ENCODE measurements at regions of chr5 and their contacts with region 1.

Region 1: DNA sequence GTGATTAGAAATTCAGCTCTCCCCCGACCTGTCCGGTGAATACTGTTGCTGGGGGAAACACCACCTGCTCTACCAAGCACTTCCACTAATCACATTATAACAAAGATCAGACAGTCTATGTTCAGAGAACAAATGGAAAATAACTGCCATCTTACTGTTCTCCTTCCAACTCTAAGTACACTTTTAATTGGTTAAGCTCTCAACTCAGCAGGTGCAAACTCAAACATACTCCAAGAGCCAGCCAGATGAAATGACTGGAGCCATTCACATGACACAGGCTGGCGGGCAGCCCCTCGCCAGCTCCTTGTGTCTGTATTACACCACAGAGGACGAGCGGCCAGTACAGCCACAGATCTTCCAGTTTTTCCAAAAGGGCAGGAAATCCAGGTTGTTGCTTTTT is 16.1 kb downstream of the LIFR start:
- DNase-seq: no peak
- H3K4me3 ChIP-seq: no peak overlapping the region
- CTCF ChIP-seq: no peak

Region 2: GRCh38 chr5:38551030-38552017 is 11.0 kb after region 1 on chr5:
- CTCF ChIA-PET with region 1: interaction called, 21 read pairs
- POLR2A ChIA-PET with region 1: no interaction called
- DNase-seq: no peak
- H3K4me3 ChIP-seq: no peak overlapping the region
- CTCF ChIP-seq: peak; percentile 71

Region 3: DNA sequence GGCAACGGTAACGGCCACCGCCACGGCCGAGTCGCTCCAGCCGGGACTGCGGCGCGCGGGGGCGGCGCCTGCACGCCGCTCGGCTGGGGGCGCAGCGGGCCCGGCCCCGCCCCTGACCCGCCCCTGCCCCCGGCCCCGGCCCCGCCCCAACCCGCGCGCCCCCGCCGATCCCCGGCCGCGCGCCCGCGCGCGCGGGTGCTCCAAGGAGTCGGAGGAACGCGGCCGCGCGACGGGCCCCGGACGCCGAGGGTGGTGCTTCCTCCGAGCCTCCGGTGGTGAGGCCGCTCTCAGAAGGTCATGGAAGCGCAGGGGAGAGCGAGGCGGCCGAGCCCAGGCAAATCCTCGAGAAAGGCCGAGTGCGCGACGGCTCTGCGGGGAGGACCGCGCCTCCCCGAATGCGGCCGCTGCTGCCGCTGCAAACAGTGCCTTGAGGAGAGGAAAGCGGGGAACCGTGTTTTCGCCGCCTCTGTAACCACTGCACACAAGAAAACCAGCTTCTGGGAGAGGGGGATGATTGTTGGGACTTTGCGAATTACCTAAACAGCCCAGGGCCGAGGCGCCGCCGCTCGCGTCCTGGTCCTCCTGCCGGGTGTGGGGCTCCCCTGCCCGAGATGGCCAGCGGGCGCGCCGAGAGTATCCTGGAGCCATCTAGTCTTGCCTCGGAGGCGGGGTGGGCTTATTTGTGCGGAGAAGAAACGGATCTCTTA is 16.4 kb after region 1 on chr5 and contains the start of gene LIFR:
- CTCF ChIA-PET with region 1: interaction called, 13 read pairs
- POLR2A ChIA-PET with region 1: no interaction called
- DNase-seq: no peak
- H3K4me3 ChIP-seq: peak within 1 kb of the TSS; percentile 76
- CTCF ChIP-seq: no peak

Region 4: GRCh38 chr5:38576442-38576841 is 36.1 kb after region 1 on chr5:
- CTCF ChIA-PET with region 1: no interaction called
- POLR2A ChIA-PET with region 1: no interaction called
- DNase-seq: no peak
- H3K4me3 ChIP-seq: no peak overlapping the region
- CTCF ChIP-seq: no peak